Dorsolateral prefrontal cortex (tissue), 120 donors: ENCODE measurements at regions of chr18 and their contacts with region 1.

Region 1: DNA sequence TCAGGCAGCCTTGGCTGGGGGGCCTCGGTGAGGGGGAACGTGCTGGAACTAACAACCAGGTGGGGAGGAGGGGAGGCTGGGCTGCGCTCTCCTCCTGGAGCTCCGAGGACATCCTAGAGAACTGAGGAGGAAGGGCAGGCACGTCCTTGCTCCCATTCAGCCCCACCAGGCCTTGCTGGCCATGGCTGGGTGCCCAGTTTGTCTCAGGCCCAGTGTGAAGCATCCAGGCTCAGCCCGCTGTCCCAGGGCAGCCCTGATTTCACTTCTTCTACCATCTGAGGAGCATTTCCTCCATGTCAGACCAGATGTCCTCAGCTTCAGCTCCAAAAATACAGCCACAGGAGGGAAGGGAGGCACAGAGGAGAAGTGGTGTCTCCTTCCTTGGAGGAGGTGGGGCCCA is 125.4 kb downstream of the CELF4 start:
- DNase-seq: peak in 1 of 10 donors; percentile 65
- H3K4me3 ChIP-seq: no peak overlapping the region
- H3K27ac ChIP-seq: peak overlapping the region in 6 of 59 donors; percentile 8 to 51 (median 24)
- H3K27me3 ChIP-seq: no peaks in the 10 kb centered on the region
- CTCF ChIP-seq: no peak

Region 2: GRCh38 chr18:37393945-37394609 is 46.1 kb before region 1 on chr18:
- intact Hi-C with region 1: loop called in 1 of 2 experiments (anchors 5 kb)
- DNase-seq: peak; percentile 87 to 96 (median 92)
- H3K4me3 ChIP-seq: peak overlapping the region; percentile 26 to 75 (median 61)
- H3K27ac ChIP-seq: peak overlapping the region in 58 of 59 donors; percentile 35 to 91 (median 84)
- H3K27me3 ChIP-seq: peaks cover 0 to 3% (median 0%) of the 10 kb centered on the region in 45 donors
- CTCF ChIP-seq: peak in 50 of 56 donors; percentile 14 to 69 (median 44)

Region 3: DNA sequence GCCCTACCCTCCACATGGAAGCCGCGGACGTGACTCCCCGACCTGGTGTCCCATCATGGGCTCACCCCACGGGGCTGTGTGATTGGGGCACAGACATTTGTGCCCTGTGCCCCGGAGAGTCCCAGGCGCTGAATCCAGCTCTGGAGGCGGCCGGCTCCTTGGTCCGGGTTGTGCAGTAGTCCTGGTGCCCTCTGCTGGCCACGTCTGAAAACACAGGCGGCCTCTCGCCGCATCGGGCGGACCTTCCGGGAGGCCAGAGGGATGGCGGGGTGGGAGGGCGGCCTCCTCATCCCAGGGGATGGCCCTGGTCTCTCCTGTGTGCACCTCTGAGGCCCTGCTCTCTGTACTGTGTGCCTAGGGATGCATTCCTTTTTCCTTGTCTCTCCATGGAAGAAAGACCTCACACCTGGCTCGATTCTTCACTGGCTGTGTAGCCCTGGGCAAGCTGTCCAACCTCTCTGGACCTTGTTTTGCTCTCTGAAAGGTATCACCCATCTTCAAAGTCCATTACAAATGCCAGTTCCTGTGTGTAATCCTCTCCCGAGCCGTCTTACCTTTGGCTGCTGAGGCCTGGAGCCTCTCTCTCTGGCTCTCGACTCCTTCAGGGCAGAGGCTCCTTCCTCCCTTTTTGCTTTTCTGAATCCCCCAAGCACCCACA is 97.8 kb after region 1 on chr18:
- intact Hi-C with region 1: loop called (anchors 5 kb)
- DNase-seq: peak; percentile 71 to 88 (median 80)
- H3K4me3 ChIP-seq: peak overlapping the region in 19 of 59 donors; percentile 5 to 48 (median 27)
- H3K27ac ChIP-seq: peak overlapping the region in 41 of 59 donors; percentile 1 to 84 (median 66)
- H3K27me3 ChIP-seq: peaks cover 0 to 10% (median 0%) of the 10 kb centered on the region in 45 donors
- CTCF ChIP-seq: peak; percentile 55 to 91 (median 83)